Activated CD4-positive, alpha-beta T cell treated with anti-CD3 and anti-CD28 coated beads for 36 hours (primary cell): ENCODE measurements at regions of chr1 and their contacts with region 1.

Region 1: DNA sequence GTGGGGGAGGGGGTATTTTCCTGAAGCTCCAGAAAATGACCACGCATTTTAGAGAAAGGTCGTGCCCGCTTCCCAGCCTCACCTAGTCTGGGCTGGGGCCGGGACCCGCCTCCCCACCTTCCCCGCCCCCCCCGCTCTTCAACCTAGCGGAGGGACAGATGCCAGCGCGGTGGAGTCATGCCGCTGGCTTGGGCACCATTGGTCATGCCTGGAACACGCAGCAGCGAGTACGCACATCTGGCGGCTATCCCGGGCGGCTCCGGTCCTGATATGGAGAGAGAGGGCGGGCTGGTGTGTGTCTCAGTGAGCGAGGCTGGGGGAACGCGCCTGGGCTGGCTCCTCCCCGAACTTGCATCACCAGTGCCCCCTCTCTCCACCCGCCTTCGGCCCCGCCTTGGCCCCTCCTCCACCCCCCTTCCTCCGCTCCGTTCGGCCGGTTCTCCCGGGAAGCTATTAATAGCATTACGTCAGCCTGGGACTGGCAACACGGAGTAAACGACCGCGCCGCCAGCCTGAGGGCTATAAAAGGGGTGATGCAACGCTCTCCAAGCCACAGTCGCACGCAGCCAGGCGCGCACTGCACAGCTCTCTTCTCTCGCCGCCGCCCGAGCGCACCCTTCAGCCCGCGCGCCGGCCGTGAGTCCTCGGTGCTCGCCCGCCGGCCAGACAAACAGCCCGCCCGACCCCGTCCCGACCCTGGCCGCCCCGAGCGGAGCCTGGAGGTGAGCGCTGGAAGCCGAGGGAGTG is at the start of gene ATF3:
- DNase-seq: peak; percentile 97
- ATAC-seq: peak; percentile 89
- H3K4me3 Mint-ChIP-seq: peak within 1 kb of the TSS; percentile 91
- H3K27ac Mint-ChIP-seq: peak within 1 kb of the TSS; percentile 96
- H3K4me1 Mint-ChIP-seq: peaks cover 56% of the 10 kb centered on the region
- H3K27me3 Mint-ChIP-seq: peaks cover 45% of the 10 kb centered on the region
- total RNA-seq, gene ATF3: 40.3 to 44.9 TPM

Region 2: DNA sequence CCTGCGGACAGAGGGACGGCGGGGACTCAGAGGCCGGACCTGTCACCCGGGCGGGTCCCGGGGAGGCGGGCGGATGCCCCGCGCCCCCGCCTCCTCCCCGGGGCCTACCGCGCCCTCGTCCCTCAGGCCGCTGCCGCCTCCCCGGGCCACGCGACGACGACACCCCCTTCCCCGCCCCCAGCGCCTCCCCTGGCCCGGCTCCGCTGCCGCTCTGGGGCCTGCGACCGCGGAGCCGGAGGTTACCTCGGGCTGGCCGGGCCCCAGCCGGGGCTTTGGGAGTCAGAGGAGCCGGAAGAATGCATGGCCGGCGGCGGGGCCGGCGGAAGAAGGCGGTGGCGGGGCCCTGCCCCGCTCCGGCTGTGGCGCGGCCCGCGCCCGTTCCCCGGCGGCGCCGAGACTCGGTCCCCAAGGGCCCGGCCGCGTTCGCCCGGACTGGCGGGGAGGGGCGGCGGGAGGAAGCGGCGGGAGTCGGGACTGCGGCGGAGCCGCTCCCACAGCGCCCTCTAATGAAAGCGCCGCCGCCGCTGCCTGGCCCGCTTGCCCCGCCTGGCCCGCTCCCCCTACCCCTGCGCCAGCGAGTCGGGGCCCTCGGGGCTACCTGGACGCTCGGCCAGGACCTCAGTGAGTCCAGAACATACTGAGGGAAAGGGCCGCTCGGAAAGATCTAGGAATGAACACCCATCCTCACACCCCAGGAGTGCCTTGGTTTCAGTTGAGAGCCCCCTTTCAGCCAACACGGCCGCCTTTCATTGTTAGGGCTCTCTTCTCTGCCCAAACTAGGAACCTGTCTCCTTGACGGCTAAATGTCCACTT is 777.8 kb before region 1 on chr1 and contains the start of gene LPGAT1:
- CTCF ChIA-PET with region 1: no interaction called
- POLR2A ChIA-PET with region 1: no interaction called
- intact Hi-C with region 1: loop called in 1 of 2 experiments (anchors 5 kb)
- DNase-seq: peak; percentile 86
- ATAC-seq: peak; percentile 83
- H3K4me3 Mint-ChIP-seq: peak within 1 kb of the TSS; percentile 82
- H3K27ac Mint-ChIP-seq: peak within 1 kb of the TSS; percentile 85
- H3K4me1 Mint-ChIP-seq: peaks cover 57% of the 10 kb centered on the region
- H3K27me3 Mint-ChIP-seq: no peaks in the 10 kb centered on the region
- total RNA-seq, gene LPGAT1: 21.7 to 24.9 TPM

Region 3: DNA sequence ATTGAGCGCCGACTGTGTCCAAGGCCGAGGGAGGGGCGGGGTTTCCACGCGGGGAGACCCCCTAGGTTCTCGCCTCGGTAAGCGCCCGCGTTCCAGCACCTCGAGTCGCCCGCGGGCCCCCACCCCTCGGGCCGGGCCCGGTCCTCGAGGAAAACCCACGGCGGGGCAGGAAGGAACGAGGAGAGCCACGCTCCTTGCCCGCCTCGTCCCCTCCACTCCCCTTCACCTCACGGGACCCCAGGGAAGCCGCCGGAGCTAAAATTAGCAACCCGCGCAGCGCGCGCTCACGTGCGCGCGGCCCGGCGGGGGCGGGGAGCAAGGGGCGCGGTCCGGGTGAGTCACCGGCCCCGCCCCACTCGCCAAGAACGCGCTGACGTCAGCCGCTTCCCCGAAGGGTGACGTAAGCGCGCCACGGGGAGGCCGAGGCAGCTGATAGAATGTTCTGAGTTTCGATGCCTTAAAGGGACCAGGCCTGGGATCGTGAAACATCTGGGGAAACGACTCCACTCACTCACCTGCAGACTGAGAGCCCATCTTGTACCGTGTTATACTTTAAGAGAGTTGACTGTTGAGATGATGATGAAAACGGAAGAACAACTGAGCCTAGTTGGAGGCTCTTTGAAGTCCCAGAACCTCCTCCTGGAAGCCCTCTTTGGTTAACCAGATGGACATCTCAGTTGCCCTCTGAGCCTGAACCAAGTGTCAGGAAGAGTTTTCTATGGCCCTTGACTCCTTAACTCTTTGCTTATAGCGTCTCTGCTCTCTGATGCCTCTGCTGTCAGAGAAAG is 49.5 kb before region 1 on chr1:
- CTCF ChIA-PET with region 1: interaction called, 3 read pairs
- POLR2A ChIA-PET with region 1: interaction called, 10 read pairs
- intact Hi-C with region 1: loop called (anchors 1 kb)
- DNase-seq: peak; percentile 95
- ATAC-seq: peak; percentile 90
- H3K4me3 Mint-ChIP-seq: peak overlapping the region; percentile 61
- H3K27ac Mint-ChIP-seq: peak overlapping the region; percentile 95
- H3K4me1 Mint-ChIP-seq: peaks cover 19% of the 10 kb centered on the region
- H3K27me3 Mint-ChIP-seq: peaks cover 14% of the 10 kb centered on the region

Region 4: DNA sequence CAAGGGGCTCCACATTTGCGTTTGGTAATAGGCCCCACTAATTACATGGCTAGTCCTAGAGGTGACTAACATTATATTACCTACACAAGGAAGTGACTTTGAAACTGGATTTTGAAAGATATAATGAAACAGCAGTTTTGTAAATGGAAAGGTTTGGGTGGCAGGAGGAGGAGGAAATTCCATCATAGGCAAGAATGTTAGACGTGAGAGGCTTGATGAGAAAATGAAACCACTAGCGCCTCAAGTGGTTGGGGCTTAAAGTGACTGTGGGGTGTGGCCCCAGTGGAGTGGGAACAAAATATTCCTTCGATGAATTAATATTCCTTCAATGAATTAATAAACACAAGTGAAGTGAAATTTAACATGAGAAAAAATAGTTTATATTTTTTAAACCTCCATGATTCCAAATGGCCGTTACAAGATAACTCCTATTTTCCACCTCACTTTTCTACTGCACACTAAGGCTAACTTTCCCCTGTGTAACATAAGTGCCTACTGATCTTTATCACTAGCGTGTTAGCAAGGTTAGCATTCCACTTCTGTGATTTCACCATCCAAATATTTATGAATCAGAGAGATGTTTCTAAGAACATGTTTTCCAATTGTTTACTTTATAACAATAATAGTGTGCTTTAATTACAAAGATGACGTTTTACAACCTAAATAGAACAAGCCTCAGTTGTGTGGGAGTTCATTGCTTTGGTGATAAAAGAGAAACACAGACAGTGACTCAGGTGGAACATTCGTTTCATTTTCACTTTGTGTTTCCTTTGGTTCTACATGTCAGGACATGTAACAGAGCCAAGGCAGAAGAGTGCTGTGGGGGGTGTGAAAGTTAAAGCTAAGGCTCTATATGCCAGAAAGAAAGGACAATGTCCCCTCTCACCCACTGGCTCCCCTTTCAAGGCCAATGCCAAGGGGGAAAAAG is 12.3 kb before region 1 on chr1:
- CTCF ChIA-PET with region 1: interaction called, 5 read pairs
- POLR2A ChIA-PET with region 1: interaction called, 14 read pairs
- intact Hi-C with region 1: loop called (anchors 1 kb)
- DNase-seq: peak; percentile 64
- ATAC-seq: peak; percentile 91
- H3K4me3 Mint-ChIP-seq: peak overlapping the region; percentile 58
- H3K27ac Mint-ChIP-seq: peak overlapping the region; percentile 89
- H3K4me1 Mint-ChIP-seq: peaks cover 39% of the 10 kb centered on the region
- H3K27me3 Mint-ChIP-seq: peaks cover 12% of the 10 kb centered on the region

Region 5: GRCh38 chr1:212630158-212630900 is 21.9 kb after region 1 on chr1:
- CTCF ChIA-PET with region 1: no interaction called
- POLR2A ChIA-PET with region 1: interaction called, 3 read pairs
- intact Hi-C with region 1: loop called in 1 of 2 experiments (anchors 1 kb)
- DNase-seq: peak; percentile 80
- ATAC-seq: peak; percentile 97
- H3K4me3 Mint-ChIP-seq: no peak overlapping the region
- H3K27ac Mint-ChIP-seq: no peak overlapping the region
- H3K4me1 Mint-ChIP-seq: peaks cover 7% of the 10 kb centered on the region
- H3K27me3 Mint-ChIP-seq: peaks cover 3% of the 10 kb centered on the region